K562 (cell line): ENCODE measurements at regions of chr16 and their contacts with region 1.

Region 1: GRCh38 chr16:20747030-20747816 is 5.6 kb upstream of the THUMPD1 start:
- DNase-seq: peak; percentile 72 to 93 (median 78)
- ATAC-seq: peak; percentile 85
- H3K4me3 ChIP-seq: no peak overlapping the region
- H3K27ac ChIP-seq: peak overlapping the region; percentile 89
- H3K4me1 ChIP-seq: peaks cover 32 to 69% of the 10 kb centered on the region in 2 experiments
- H3K27me3 ChIP-seq: no peaks in the 10 kb centered on the region
- CTCF ChIP-seq: no peak
- EP300 ChIP-seq: peak; percentile 97
- POLR2A ChIP-seq: no peak
- RAD21 ChIP-seq: no peak; a peak in 3 of 4 replicates

Region 2: DNA sequence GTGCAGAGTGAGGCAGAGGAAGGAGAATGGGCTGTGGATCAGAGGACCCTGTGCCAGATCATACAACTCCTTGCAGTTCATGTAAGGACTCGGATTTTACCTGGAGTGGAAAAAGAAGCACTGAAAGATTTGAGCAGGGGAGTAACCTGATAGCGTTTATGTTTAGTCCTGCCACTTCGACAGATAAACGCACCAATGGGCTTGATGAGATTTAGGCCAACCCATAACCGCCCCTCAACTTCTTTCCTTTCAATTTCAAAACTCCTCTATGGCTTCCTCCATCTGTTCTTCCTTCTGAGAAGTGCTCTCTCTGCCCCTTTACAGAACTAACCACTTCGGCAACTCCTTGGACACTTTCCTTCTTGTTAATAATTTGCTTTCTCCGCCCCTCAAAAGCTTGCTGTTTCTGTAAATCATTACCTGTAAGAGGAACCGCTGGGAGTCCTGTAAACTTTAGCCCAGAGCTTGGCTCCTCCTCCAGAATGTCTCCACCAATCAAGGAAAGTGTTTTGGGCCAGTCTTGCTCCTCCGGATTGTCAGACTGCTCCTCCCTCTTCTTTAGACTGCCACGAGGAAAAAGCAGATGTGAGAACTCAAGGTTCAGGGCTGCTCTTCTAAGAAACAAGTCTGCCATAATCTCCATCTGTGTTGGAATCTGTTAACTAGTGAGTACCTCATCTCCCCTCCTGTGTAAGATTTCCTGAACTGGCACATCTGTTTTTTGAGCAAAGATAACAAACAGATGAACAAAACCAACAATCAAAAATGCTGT is 16.4 kb after region 1 on chr16 and contains the start of gene ACSM3:
- CTCF ChIA-PET with region 1: no interaction called
- POLR2A ChIA-PET with region 1: interaction called, 5 read pairs
- in situ Hi-C with region 1: no loop called
- intact Hi-C with region 1: loop called (anchors 2 kb)
- DNase-seq: peak; percentile 88 to 93 (median 91)
- ATAC-seq: peak; percentile 96
- H3K4me3 ChIP-seq: peak within 1 kb of the TSS; percentile 47
- H3K27ac ChIP-seq: peak within 1 kb of the TSS; percentile 73
- H3K4me1 ChIP-seq: peaks cover 4 to 34% of the 10 kb centered on the region in 2 experiments; a peak in 4 of 5 replicates
- H3K27me3 ChIP-seq: no peaks in the 10 kb centered on the region
- CTCF ChIP-seq: no peak
- EP300 ChIP-seq: peak; percentile 29; the same call in 1 of the 2 replicates
- POLR2A ChIP-seq: peak; percentile 66
- RAD21 ChIP-seq: no peak; a peak in 1 of 4 replicates
- polyA plus RNA-seq, gene ACSM3: 198 to 259 TPM